Activated T-helper 1 cell treated with anti-CD3 and anti-CD28 coated beads, Interleukin-12 subunit alpha, Interleukin-12 subunit beta, Interleukin-2, Interleukin-4 antibody, amounts not matched to agents 30 ng/mL and 10 ng/mL and 1 ng/mL, durations not matched to agents 14 hours and 24 hours and 36 hours (primary cell): ENCODE measurements at regions of chr5 and their contacts with region 1.

Region 1: DNA sequence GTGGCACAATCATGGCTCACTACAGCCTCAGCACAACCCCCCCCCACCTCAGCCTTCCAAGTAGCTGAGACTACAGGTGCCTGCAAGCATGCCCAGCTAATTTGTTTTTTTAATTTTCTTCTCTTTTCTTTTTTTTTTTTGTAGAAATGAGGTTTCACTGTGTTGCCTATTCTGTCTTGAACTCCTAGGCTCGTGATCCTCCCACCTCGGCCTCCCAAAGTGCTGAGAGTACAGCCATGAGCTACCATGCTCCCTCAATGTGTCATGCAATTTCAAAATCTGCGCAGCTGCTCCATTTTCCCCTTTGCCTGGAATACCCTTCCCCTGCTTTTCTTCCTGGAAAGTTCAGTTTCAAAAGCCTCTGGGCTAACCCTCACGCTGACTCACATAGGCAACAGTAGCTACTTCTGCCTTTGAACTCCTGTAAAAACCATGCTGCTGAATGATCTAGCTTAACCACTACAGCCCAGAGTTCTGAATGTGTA is 71.0 kb upstream of the IL7R start:
- DNase-seq: peak; percentile 30
- H3K4me3 Mint-ChIP-seq: peak overlapping the region; percentile 24
- H3K27ac Mint-ChIP-seq: peak overlapping the region; percentile 86
- H3K4me1 Mint-ChIP-seq: peaks cover 90% of the 10 kb centered on the region
- H3K27me3 Mint-ChIP-seq: no peaks in the 10 kb centered on the region

Region 2: DNA sequence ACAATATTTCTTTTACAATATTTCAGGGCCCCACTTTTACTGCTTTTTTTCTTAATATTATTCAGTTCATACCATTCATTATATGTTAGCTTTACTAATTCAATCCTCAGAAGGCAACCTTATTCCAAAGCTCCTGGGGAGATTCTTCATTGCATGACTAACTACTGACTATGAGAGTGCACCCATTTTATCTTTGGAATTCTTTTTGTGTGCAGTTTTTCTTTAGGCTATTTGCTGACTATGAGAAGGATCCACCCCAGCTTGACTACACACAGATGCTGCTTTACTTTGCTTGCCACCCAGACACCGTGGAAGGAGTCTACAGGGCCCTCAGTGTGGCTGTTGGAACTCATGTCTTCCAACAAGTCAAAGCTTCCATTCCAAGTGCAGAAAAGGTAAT is 14.1 kb after region 1 on chr5:
- intact Hi-C with region 1: loop called (anchors 1 kb)
- DNase-seq: no peak
- H3K4me3 Mint-ChIP-seq: no peak overlapping the region
- H3K27ac Mint-ChIP-seq: no peak overlapping the region
- H3K4me1 Mint-ChIP-seq: peaks cover 70% of the 10 kb centered on the region
- H3K27me3 Mint-ChIP-seq: no peaks in the 10 kb centered on the region

Region 3: GRCh38 chr5:35811108-35811741 is 25.6 kb after region 1 on chr5:
- intact Hi-C with region 1: loop called (anchors 2 kb)
- DNase-seq: no peak
- H3K4me3 Mint-ChIP-seq: peak overlapping the region; percentile 70
- H3K27ac Mint-ChIP-seq: peak overlapping the region; percentile 98
- H3K4me1 Mint-ChIP-seq: peaks cover 56% of the 10 kb centered on the region
- H3K27me3 Mint-ChIP-seq: no peaks in the 10 kb centered on the region